IMR-90 (cell line): ENCODE measurements at regions of chr11 and their contacts with region 1.

Region 1: GRCh38 chr11:122101625-122102291 is 14.3 kb downstream of the BLID start:
- DNase-seq: peak; percentile 85
- ATAC-seq: peak; percentile 36
- H3K4me3 ChIP-seq: peak overlapping the region; percentile 91
- H3K27ac ChIP-seq: peak overlapping the region; percentile 95
- H3K4me1 ChIP-seq: peaks cover 11% of the 10 kb centered on the region
- H3K27me3 ChIP-seq: no peaks in the 10 kb centered on the region
- CTCF ChIP-seq: peak; percentile 55
- POLR2A ChIP-seq: peak; percentile 51
- RAD21 ChIP-seq: peak; percentile 61

Region 2: DNA sequence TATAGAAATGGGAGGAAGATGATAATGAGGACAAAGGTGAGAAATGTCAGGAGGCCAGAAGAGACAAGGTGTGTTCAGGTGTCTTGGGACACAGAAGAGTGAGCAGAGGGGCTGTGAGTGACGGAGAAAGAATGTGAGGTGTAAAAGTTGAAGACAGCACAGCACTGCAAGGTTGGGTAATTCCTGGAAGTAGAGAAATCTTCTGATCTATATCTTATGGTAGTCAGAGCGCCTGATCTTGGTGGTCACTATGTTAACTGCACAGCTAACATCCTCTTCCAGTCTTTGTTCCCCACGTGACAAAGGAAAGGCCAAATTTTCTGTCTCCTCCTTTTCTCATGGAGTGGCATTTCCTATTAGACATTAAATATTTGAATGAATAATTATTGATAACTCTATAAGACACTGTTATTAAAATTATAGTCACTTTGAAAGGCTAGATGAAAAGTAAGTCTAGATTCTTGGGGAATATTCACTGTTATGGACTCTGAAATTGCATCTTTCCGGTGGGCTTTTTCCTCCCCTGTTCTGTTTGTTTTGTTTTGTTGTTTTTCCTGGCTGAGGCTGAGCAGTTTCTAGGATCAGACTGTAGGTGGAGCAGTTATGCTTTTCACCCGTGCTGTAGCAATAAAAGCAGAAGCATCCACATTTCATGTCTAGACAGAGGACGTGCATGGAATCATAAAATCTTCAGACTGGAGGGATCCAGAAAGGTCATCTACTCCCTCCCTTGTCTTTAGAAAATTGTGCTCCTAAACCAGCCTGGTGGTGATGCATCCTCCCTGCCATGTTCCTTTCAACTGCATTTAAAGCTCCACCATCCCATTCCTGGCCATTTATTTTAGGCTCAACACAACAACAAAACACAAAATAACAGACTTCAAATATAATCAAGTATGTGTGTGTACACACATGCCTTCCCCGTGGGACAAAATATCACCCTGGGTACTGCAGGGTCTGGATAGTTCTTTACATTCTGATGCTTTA is 782.6 kb before region 1 on chr11:
- CTCF ChIA-PET with region 1: no interaction called
- POLR2A ChIA-PET with region 1: no interaction called
- dilution Hi-C with region 1: no loop called
- in situ Hi-C with region 1: no loop called
- intact Hi-C with region 1: loop called (anchors 5 kb)
- DNase-seq: peak; percentile 56
- ATAC-seq: peak; percentile 89
- H3K4me3 ChIP-seq: no peak overlapping the region
- H3K27ac ChIP-seq: no peak overlapping the region
- H3K4me1 ChIP-seq: no peaks in the 10 kb centered on the region
- H3K27me3 ChIP-seq: peaks cover 12% of the 10 kb centered on the region
- CTCF ChIP-seq: peak; percentile 73
- POLR2A ChIP-seq: no peak
- RAD21 ChIP-seq: peak; percentile 65

Region 3: DNA sequence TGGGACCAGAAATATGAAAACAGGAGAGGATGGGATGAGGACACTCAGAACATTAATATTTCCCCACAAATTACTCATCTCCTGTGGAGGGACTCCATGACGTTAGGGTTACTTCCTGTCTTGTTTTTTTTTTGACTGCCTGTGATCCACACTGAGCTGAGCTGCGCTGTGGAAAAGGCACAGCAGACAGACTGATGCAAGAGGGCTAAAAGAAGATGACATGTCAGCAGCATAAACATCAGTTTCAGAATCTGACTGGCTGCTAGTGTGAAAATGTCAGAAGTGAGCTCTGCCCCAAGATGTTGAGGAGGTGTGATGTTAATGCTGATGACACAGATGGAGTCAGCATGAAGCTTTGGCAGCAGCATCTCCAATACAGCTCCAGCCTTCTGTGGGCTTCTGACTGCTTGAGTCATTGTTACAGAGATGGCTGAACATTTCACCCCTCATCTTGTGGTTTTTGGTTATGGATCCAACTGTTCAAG is 272.6 kb before region 1 on chr11:
- CTCF ChIA-PET with region 1: no interaction called
- POLR2A ChIA-PET with region 1: no interaction called
- dilution Hi-C with region 1: no loop called
- in situ Hi-C with region 1: no loop called
- intact Hi-C with region 1: loop called (anchors 5 kb)
- DNase-seq: peak; percentile 100
- ATAC-seq: peak; percentile 95
- H3K4me3 ChIP-seq: no peak overlapping the region; the same call in 1 of the 2 replicates
- H3K27ac ChIP-seq: peak overlapping the region; percentile 19
- H3K4me1 ChIP-seq: no peaks in the 10 kb centered on the region
- H3K27me3 ChIP-seq: no peaks in the 10 kb centered on the region
- CTCF ChIP-seq: no peak
- POLR2A ChIP-seq: peak; percentile 35; the same call in 1 of the 2 replicates
- RAD21 ChIP-seq: peak; percentile 38

Region 4: GRCh38 chr11:122179961-122180834 is 78.4 kb after region 1 on chr11:
- CTCF ChIA-PET with region 1: no interaction called
- POLR2A ChIA-PET with region 1: interaction called, 6 read pairs
- dilution Hi-C with region 1: no loop called
- in situ Hi-C with region 1: no loop called
- intact Hi-C with region 1: loop called (anchors 1 kb)
- DNase-seq: peak; percentile 98
- ATAC-seq: peak; percentile 86
- H3K4me3 ChIP-seq: peak overlapping the region; percentile 61
- H3K27ac ChIP-seq: peak overlapping the region; percentile 93
- H3K4me1 ChIP-seq: peaks cover 15% of the 10 kb centered on the region
- H3K27me3 ChIP-seq: no peaks in the 10 kb centered on the region
- CTCF ChIP-seq: no peak
- POLR2A ChIP-seq: peak; percentile 77; the same call in 1 of the 2 replicates
- RAD21 ChIP-seq: no peak

Region 5: DNA sequence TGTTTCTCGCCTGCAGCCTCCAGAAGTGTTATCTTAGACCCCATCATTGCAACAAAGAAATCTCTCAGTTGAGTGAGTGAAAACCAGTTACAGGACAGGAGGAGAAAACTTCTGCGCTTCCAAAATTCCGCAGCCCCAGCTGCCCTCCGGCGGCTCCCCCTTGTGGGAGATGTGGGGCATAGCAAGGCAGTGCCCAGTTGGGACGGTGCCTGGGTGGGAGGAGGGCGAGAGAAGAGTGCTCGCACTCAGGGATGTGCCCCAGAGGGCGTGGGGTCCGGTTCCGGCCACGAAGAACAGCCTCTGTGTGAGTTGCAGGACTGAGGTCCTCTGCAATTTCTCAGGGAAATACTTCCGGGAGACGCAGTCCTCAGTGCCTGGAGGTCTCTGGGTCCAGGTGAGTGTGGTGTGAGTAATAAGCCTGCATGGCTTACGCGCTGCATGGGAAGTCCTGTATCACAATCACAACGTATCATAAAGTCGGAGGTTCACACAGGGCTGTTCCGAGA is 101.2 kb after region 1 on chr11:
- CTCF ChIA-PET with region 1: no interaction called
- POLR2A ChIA-PET with region 1: interaction called, 5 read pairs
- dilution Hi-C with region 1: no loop called
- in situ Hi-C with region 1: loop called (anchors 10 kb)
- intact Hi-C with region 1: loop called (anchors 2 kb)
- DNase-seq: peak; percentile 71
- ATAC-seq: peak; percentile 73
- H3K4me3 ChIP-seq: peak overlapping the region; percentile 54
- H3K27ac ChIP-seq: peak overlapping the region; percentile 98
- H3K4me1 ChIP-seq: peaks cover 40% of the 10 kb centered on the region
- H3K27me3 ChIP-seq: no peaks in the 10 kb centered on the region
- CTCF ChIP-seq: peak; percentile 95
- POLR2A ChIP-seq: 0 out of 2 replicates have a peak, but pooled peaks have one; percentile 40
- RAD21 ChIP-seq: peak; percentile 95

Region 6: DNA sequence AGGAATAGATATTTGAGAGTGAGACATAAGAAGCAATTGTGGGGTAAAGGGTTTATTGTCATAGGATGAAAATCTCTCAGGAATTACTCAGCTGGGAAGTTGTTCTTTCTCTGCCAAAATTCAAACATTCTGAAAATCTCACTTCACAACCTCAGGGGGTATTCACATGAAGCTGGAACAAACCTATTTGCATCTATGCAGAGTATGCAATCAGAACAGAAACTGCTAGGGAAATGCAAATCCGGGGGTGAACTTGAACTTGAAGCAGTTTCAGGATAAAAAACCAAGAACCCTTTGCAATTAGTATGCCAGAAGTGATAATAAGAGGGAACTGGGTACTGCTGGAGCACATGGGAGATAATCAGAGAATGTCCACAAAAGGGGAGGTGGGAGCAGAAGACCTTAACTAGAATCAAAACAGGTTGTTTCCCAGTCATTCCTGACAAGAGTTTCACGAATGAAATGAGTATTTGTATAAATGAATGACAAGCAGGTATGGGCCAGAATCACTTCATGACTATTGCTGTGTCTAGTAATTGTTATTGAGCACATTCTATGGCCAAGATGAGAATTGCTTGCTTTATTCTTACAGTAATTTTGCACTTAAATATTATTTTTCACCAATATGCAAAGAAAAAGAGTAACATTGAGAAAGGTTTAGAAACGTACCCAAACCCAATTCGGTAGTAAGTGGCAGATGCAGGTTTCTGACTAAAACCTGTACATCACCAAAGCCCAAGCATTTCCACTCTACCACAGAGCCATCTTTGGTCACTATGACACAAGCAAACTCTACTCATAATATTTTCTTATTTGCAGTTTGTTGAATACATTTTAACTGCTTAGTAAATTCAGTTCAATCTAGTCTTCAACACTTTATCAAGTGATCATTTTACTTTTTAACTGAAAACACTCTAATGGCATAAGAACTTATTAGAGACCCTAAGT is 492.0 kb after region 1 on chr11:
- CTCF ChIA-PET with region 1: no interaction called
- POLR2A ChIA-PET with region 1: no interaction called
- dilution Hi-C with region 1: no loop called
- in situ Hi-C with region 1: no loop called
- intact Hi-C with region 1: no loop called
- DNase-seq: no peak
- ATAC-seq: no peak
- H3K4me3 ChIP-seq: no peak overlapping the region
- H3K27ac ChIP-seq: no peak overlapping the region
- H3K4me1 ChIP-seq: no peaks in the 10 kb centered on the region
- H3K27me3 ChIP-seq: peaks cover 22% of the 10 kb centered on the region
- CTCF ChIP-seq: no peak
- POLR2A ChIP-seq: no peak
- RAD21 ChIP-seq: no peak